HepG2 (cell line): ENCODE measurements at regions of chr11 and their contacts with region 1.

Region 1: DNA sequence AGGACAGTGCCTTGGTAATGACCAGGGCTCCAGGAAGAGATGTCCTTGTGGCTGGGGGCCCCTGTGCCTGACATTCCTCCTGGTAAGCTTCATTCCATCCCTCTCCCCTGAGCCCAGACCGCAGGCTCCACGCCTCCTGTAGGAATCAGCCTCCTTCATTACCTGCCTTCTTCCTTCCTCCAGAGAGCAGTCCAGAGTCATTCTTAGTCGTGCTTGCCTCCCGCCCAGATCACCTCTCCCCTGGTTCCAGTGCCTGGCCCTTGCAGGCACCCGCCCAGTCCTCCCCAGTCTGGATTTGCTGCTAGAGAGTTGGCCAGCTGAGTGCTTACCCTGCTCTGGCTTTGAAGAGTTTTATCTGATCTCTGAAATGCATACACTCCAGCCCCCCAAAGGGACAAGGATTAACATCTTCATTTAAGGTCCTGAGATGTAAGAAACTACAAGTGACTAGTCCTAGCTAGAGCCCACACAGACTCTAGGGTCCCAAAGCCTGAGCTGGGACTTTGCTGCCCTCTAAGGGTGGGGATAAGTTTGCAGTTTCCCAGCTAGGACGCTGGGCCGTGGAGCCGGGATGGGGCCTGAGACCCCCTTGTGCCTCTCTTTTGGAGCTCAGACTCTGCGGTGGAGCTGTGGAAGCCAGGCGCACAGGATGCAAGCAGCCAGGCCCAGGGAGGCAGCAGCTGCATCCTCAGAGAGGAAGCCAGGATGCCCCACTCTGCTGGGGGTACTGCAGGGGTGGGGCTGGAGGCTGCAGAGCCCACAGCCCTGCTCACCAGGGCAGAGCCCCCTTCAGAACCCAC is 1.6 kb downstream of the NR1H3 start:
- DNase-seq: peak; percentile 46
- ATAC-seq: peak; percentile 66
- H3K4me3 ChIP-seq: peak overlapping the region in 1 of 3 experiments; percentile 48; a peak in 1 of 6 replicates
- H3K27ac ChIP-seq: peak overlapping the region; percentile 48
- H3K4me1 ChIP-seq: peaks cover 55% of the 10 kb centered on the region
- H3K27me3 ChIP-seq: no peaks in the 10 kb centered on the region
- CTCF ChIP-seq: peak; percentile 89
- EP300 ChIP-seq: no peak
- POLR2A ChIP-seq: no peak
- RAD21 ChIP-seq: peak; percentile 76

Region 2: GRCh38 chr11:47176328-47177228 is 82.8 kb before region 1 on chr11 and contains the start of gene ARFGAP2:
- CTCF ChIA-PET with region 1: interaction called, 27 read pairs
- POLR2A ChIA-PET with region 1: interaction called, 60 read pairs
- in situ Hi-C with region 1: no loop called
- intact Hi-C with region 1: loop called (anchors 1 kb)
- DNase-seq: peak; percentile 84
- ATAC-seq: peak; percentile 90
- H3K4me3 ChIP-seq: peak within 1 kb of the TSS; percentile 91 to 98 (median 93)
- H3K27ac ChIP-seq: peak within 1 kb of the TSS; percentile 84
- H3K4me1 ChIP-seq: peaks cover 62% of the 10 kb centered on the region
- H3K27me3 ChIP-seq: no peaks in the 10 kb centered on the region; a peak in 1 of 5 replicates
- CTCF ChIP-seq: no peak
- EP300 ChIP-seq: no peak
- POLR2A ChIP-seq: peak in 1 of 2 experiments; percentile 54; a peak in 1 of 4 replicates
- RAD21 ChIP-seq: no peak
- total RNA-seq, gene ARFGAP2: 67.9 and 75.3 TPM in 2 replicates

Region 3: GRCh38 chr11:47186076-47186936 is 73.1 kb before region 1 on chr11 and contains the start of gene PACSIN3:
- CTCF ChIA-PET with region 1: no interaction called
- POLR2A ChIA-PET with region 1: interaction called, 105 read pairs
- in situ Hi-C with region 1: no loop called
- intact Hi-C with region 1: loop called (anchors 2 kb)
- DNase-seq: peak; percentile 43
- ATAC-seq: peak; percentile 20
- H3K4me3 ChIP-seq: peak within 1 kb of the TSS; percentile 70 to 86 (median 77)
- H3K27ac ChIP-seq: peak within 1 kb of the TSS; percentile 98
- H3K4me1 ChIP-seq: peaks cover 56% of the 10 kb centered on the region
- H3K27me3 ChIP-seq: no peaks in the 10 kb centered on the region
- CTCF ChIP-seq: no peak
- EP300 ChIP-seq: no peak
- POLR2A ChIP-seq: peak in 1 of 2 experiments; percentile 63; a peak in 2 of 4 replicates
- RAD21 ChIP-seq: no peak
- total RNA-seq, gene PACSIN3: 86.4 and 93.3 TPM in 2 replicates

Region 4: DNA sequence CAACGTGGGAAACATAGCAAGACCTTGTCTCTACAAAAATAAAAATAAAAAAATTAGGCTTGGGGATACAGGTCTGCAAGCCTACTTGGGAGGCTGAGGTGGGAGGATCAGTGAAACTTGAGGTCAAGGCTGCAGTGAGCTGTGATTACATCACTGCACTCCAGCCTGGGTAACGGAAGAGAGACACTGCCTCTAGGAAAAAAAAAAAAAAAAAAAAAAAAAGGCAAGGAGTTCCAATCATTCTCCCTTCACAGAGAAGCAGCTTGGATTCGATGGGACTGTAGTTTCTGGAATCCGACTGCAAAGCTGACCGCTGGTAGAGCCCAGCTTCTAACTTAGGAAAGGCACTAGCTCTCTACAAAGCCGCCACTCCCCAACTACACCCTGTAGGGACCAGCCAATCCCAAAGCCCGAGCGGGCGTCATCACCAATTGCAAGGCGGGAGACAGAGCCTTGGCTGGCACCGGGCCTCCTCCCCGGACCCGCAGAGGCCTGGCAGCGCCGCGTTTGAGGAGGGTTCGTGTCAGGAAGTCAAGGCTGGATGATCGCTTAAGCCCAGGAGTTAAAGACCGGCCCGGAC is 45.3 kb before region 1 on chr11:
- CTCF ChIA-PET with region 1: no interaction called
- POLR2A ChIA-PET with region 1: interaction called, 32 read pairs
- in situ Hi-C with region 1: no loop called
- intact Hi-C with region 1: loop called (anchors 1 kb)
- DNase-seq: peak; percentile 86
- ATAC-seq: peak; percentile 90
- H3K4me3 ChIP-seq: peak overlapping the region; percentile 70 to 86 (median 79)
- H3K27ac ChIP-seq: peak overlapping the region; percentile 73
- H3K4me1 ChIP-seq: peaks cover 57% of the 10 kb centered on the region
- H3K27me3 ChIP-seq: no peaks in the 10 kb centered on the region; a peak in 1 of 5 replicates
- CTCF ChIP-seq: no peak
- EP300 ChIP-seq: no peak
- POLR2A ChIP-seq: peak; percentile 21 to 58; a peak in 3 of 4 replicates
- RAD21 ChIP-seq: no peak

Region 5: GRCh38 chr11:47233989-47234668 is 25.2 kb before region 1 on chr11:
- CTCF ChIA-PET with region 1: interaction called, 7 read pairs
- POLR2A ChIA-PET with region 1: interaction called, 15 read pairs
- in situ Hi-C with region 1: no loop called
- intact Hi-C with region 1: no loop called
- DNase-seq: peak; percentile 41
- ATAC-seq: peak; percentile 69
- H3K4me3 ChIP-seq: no peak overlapping the region
- H3K27ac ChIP-seq: no peak overlapping the region
- H3K4me1 ChIP-seq: peaks cover 16% of the 10 kb centered on the region
- H3K27me3 ChIP-seq: no peaks in the 10 kb centered on the region
- CTCF ChIP-seq: peak; percentile 59
- EP300 ChIP-seq: no peak
- POLR2A ChIP-seq: no peak; a peak in 1 of 4 replicates
- RAD21 ChIP-seq: peak; percentile 40; the same call in 1 of the 2 replicates

Region 6: DNA sequence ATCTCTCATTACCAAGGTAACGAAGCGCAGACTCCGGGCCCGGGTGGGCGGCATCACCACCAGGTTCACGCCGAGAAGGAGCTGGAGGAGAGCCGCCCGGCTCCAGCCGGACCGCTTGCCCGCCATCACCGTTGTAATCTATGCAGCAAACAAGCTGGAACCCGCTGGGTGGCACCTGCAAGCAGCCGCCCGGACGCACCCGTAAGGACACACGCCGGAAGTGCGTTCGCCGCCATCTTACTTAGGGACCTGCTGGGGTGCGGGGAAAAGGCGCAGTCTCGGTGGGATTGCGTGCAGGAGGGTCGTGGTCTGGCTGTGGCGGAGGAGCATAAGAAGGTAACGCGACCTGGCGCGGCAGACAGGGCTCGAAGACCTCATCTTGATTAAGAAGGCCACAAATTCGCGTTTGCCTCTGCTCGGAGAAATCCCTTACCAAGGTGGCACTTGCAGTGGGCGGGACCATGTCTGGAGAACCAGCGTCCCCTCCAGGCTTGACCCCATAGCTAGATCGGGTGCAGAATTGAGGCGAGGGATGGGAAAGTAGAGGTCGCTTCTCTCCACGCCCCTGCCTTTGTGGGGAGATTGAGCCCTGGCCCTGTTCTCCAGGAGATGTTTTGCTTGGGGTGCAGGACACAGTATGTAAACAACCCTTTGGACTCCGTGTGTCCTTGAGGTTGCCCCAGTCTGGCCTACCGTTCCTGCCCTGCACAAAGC is 10.6 kb before region 1 on chr11 and contains the start of gene ACP2:
- CTCF ChIA-PET with region 1: no interaction called
- POLR2A ChIA-PET with region 1: interaction called, 106 read pairs
- in situ Hi-C with region 1: no loop called
- intact Hi-C with region 1: no loop called
- DNase-seq: peak; percentile 85
- ATAC-seq: peak; percentile 89
- H3K4me3 ChIP-seq: peak within 1 kb of the TSS; percentile 69 to 92 (median 85)
- H3K27ac ChIP-seq: peak within 1 kb of the TSS; percentile 94
- H3K4me1 ChIP-seq: peaks cover 69% of the 10 kb centered on the region
- H3K27me3 ChIP-seq: no peaks in the 10 kb centered on the region; a peak in 1 of 5 replicates
- CTCF ChIP-seq: peak; percentile 57
- EP300 ChIP-seq: peak; percentile 58 to 59
- POLR2A ChIP-seq: peak; percentile 89 to 90
- RAD21 ChIP-seq: peak; percentile 72
- total RNA-seq, gene ACP2: 7.8 and 20.2 TPM in 2 replicates

Region 7: DNA sequence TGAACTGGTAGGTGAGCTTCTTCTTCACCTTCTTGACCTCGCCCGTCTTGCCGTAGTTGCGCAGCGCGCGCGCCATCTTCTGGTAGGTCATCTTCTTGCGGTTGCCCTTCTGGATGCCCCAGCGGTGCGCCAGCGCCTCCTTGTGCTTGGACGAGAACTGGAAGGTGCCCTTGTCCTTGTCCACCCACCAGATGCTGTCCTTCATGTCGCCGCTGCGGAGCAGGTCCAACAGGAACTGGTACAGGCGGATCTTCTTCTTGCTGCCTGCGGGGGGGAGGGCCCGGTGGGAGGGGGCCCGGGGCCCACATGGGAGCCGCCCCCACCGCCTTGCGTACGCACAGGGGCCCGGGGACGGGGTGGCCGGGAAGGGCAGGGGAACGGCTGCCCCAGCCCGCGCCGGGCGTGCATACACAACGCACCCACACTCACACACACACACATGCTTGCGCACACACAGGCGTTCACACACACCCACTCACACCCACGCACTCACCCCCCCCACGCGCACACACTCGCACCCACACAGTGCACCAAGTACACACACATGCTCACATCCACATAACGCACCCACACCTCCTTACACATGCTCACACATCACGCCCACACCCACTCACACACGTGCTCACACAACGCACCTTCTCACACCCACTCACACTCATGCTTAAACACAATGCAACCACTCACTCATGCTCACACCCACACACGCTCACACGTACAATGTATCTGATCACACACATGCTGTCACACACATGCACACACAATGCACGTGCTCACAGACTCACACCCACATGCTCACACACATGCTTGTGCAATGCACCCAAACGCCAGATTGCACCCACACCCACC is 96.1 kb after region 1 on chr11:
- CTCF ChIA-PET with region 1: interaction called, 20 read pairs
- POLR2A ChIA-PET with region 1: no interaction called
- in situ Hi-C with region 1: no loop called
- intact Hi-C with region 1: loop called (anchors 2 kb)
- DNase-seq: peak; percentile 86
- ATAC-seq: peak; percentile 87
- H3K4me3 ChIP-seq: peak overlapping the region; percentile 54 to 72 (median 66)
- H3K27ac ChIP-seq: no peak overlapping the region
- H3K4me1 ChIP-seq: peaks cover 64% of the 10 kb centered on the region
- H3K27me3 ChIP-seq: peaks cover 6 to 31% of the 10 kb centered on the region in 2 experiments; a peak in 3 of 5 replicates
- CTCF ChIP-seq: peak; percentile 100
- EP300 ChIP-seq: no peak
- POLR2A ChIP-seq: no peak
- RAD21 ChIP-seq: peak; percentile 97